ENCODE measurements at regions of chr11 and their contacts with region 1.

Region 1: DNA sequence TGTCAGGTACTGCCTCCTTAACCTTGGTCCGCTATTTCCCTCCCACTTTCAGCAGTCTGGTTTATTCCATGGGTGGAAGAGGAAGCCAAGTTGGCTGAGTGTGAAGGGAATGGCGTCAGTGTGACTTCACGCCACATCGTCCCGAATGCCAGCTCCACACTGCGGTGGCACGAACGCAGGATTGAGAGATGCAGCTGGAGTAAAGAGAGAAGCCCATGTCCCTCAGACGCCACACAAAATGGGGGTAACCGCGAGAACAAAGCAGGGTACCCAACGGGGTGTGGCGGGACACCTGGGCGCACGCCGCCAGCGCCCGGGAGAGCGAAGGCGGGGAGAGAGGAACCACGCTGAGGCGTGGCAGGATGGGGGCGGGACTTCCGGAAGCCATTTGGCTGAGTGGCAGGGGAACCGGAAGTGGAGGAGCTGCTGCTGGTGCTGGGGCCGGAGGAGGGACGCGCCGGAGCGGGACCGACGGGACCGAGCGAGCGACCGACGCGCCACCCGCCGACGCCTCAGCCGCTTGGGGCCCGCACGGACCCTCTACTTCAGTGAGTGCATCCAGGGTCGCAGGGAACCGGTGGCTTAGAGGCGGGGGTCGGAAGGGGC is at the start of gene PAFAH1B2:
- DNase-seq: peak; percentile 99
- total RNA-seq, gene PAFAH1B2: 68.9 TPM

Region 2: DNA sequence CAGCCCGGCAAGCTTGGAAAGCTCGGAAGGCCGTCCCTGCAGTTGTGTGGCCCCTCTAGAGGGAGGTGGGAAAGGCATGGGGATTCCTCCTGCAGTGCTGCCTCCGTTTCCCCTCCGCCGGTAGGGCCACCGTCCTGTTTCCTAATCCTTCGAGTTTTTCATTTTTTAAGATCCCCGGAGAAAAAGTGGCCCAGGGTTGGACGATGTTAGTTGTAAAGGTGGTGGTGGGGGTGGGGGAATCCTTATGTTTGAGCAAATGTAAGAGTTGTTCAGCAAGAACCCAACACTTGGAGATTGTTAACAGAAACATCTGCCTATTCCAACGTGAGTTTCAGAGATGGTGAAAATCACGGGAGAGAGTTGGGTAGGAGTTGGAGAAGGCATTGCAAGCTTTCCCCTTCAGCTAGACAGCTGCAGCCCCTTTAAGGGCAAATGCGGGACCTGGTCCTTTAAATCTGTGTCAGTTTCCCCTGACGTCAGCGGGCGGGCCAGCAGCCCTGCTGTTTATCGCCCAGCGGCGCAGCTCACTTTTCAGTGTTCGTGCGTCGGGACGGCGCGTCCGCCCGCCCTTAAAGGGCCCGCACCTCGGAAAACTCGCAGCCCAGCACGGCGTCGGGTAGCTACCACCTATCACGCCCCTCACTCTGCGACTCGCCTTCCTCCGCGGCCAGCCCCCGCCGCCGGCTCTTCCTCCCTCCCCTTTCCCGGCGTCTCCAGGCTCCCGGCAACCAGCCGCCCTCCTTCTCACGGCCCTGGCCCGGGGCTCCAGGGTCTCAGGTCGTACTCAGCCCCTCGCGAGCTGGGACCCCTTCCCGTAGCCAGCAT is 34.4 kb after region 1 on chr11 and contains the start of gene SIDT2:
- intact Hi-C with region 1: loop called (anchors 2 kb)
- DNase-seq: peak; percentile 98
- total RNA-seq, gene SIDT2: 25.3 TPM

Measured in cardiac septum (tissue), 1 donor.